Sigmoid colon (tissue), 7 donors: ENCODE measurements at regions of chr11 and their contacts with region 1.

Region 1: DNA sequence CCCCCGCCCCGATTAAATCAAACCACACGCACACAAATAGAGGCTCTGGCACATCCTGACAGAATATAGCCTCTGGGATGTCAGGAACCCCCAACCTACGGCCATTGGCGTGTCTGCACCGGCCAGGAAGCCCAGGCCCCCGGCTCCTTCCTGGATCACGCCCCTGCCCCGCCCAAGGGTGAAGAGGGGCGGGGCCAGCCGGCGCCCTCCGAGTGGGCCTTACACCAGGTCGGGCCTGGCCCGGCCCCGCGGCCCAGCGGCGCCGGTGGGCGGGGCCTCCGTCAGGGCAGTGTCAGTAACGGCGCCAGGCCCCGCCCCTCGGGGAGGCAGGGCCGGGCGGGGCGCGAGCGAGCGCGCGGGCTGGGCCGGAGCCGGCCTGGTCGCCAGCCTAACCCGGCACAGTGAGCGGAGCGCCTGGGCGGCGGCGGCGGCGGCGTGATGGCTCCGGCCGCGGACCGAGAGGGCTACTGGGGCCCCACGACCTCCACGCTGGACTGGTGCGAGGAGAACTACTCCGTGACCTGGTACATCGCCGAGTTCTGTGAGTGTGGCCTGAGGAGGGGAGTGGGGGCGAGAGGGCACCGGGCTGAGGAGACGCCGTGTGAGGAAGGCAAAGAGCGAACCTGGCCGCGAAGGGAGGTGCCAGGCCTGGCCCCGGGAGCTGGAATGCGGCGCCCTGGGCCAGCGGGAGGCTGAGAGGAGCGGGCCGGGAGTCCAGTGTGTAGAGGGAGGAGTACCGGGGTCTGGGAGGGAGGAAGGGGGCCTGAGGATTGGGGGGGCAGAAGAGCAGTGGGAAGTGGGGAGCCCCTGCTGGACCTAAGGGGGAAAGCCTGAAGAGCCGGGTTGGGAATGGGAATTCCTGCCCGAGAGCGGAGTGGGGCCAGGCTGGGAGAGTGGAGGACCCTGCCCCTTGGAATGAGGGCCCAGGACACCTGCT is at the start of gene ACER3:
- DNase-seq: peak; percentile 94
- H3K4me3 ChIP-seq: peak within 1 kb of the TSS; percentile 55 to 85 (median 70)
- H3K27ac ChIP-seq: peak within 1 kb of the TSS; percentile 84 to 91 (median 86)
- H3K4me1 ChIP-seq: peaks cover 0 to 21% (median 12%) of the 10 kb centered on the region in 4 donors
- H3K27me3 ChIP-seq: no peaks in the 10 kb centered on the region
- CTCF ChIP-seq: peak in 2 of 4 experiments; percentile 21 to 23
- EP300 ChIP-seq: no peak
- POLR2A ChIP-seq: peak; percentile 54
- total RNA-seq, gene ACER3: 5.6 to 12.1 (median 10.4) TPM

Region 2: GRCh38 chr11:76823481-76824078 is 37.2 kb before region 1 on chr11:
- intact Hi-C with region 1: no loop called
- DNase-seq: no peak
- H3K4me3 ChIP-seq: no peak overlapping the region
- H3K27ac ChIP-seq: peak overlapping the region in 1 of 4 donors; percentile 64
- H3K4me1 ChIP-seq: no peaks in the 10 kb centered on the region
- H3K27me3 ChIP-seq: no peaks in the 10 kb centered on the region
- CTCF ChIP-seq: no peak
- EP300 ChIP-seq: no peak
- POLR2A ChIP-seq: no peak

Region 3: GRCh38 chr11:77411717-77412441 is 551.1 kb after region 1 on chr11:
- intact Hi-C with region 1: loop called (anchors 5 kb)
- DNase-seq: peak; percentile 92
- H3K4me3 ChIP-seq: peak overlapping the region; percentile 43 to 67 (median 62)
- H3K27ac ChIP-seq: peak overlapping the region; percentile 84 to 89 (median 88)
- H3K4me1 ChIP-seq: peaks cover 0 to 45% (median 33%) of the 10 kb centered on the region in 4 donors
- H3K27me3 ChIP-seq: no peaks in the 10 kb centered on the region
- CTCF ChIP-seq: no peak
- EP300 ChIP-seq: no peak
- POLR2A ChIP-seq: peak; percentile 28 to 53